GM12878 (cell line): ENCODE measurements at regions of chr10 and their contacts with region 1.

Region 1: DNA sequence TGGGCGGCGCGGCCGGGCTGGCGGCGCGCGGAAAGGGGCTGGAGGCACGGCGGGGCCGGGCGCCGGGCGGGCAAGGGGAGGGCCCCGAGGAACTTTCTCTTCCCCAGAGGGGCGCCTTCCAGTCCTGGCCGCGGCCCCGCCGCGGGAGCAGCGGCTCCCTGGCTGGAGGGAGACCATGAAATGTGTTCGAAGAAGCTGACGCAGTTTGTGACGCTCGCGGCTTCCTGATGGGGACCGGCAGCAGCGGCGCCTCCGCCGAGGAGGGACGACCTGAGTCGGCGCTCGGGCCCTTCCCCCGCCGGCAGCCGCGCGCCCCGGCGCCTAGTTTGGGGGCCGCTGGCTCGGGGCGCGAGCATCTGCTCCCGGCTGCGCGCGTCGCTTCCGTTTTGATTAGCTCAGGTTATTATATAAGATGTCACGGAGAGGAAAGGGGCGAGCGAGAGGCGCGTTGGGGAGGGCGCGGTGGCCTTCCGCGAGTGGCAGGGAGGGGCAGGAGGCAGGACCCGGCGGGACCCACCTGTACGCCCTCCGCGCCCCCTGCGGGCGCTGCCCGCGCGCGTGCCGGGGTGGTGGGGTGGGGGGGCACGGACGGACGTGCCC is 57.1 kb upstream of the PCGF5 start:
- DNase-seq: no peak
- ATAC-seq: peak; percentile 74
- H3K4me3 ChIP-seq: peak overlapping the region; percentile 84
- H3K27ac ChIP-seq: peak overlapping the region; percentile 79
- H3K4me1 ChIP-seq: peaks cover 14% of the 10 kb centered on the region; the same call in 1 of the 2 replicates
- H3K27me3 ChIP-seq: no peaks in the 10 kb centered on the region
- CTCF ChIP-seq: no peak
- EP300 ChIP-seq: 0 out of 4 replicates have a peak, but pooled peaks of 1 of the 2 experiments have one; percentile 30
- POLR2A ChIP-seq: peak; percentile 87
- RAD21 ChIP-seq: no peak; the same call in 1 of the 2 replicates

Region 2: DNA sequence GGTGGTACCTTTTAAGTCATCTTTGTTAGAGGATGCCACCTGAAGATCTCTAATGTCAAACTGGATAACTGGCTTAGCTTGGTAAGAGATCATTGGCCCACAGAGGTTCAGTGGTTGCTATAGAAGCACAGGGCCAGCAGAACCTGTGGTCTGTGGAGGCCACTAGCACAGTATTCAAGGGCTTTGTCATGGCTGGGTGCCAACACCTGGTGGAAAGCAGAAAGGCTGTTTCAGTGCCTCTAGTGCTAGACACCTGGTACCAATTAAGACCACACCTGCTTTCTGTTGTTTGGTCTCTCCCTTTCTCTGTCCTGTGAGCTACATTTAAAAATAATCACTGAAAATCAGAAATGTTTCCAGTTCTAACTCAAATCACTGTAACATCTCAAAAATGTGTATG is 47.1 kb after region 1 on chr10:
- CTCF ChIA-PET with region 1: no interaction called
- POLR2A ChIA-PET with region 1: no interaction called
- RAD21 ChIA-PET with region 1: interaction called, 4 read pairs
- SMC1A ChIA-PET with region 1: interaction called, 11 read pairs
- in situ Hi-C with region 1: no loop called
- intact Hi-C with region 1: no loop called
- DNase-seq: no peak
- ATAC-seq: peak; percentile 86
- H3K4me3 ChIP-seq: no peak overlapping the region
- H3K27ac ChIP-seq: no peak overlapping the region
- H3K4me1 ChIP-seq: peaks cover 36% of the 10 kb centered on the region
- H3K27me3 ChIP-seq: no peaks in the 10 kb centered on the region
- CTCF ChIP-seq: no peak
- EP300 ChIP-seq: no peak; a peak in 1 of 4 replicates
- POLR2A ChIP-seq: no peak
- RAD21 ChIP-seq: no peak

Region 3: GRCh38 chr10:91220194-91220953 is 57.0 kb after region 1 on chr10 and contains the start of gene PCGF5:
- CTCF ChIA-PET with region 1: interaction called, 10 read pairs
- POLR2A ChIA-PET with region 1: interaction called, 4 read pairs
- RAD21 ChIA-PET with region 1: interaction called, 10 read pairs
- SMC1A ChIA-PET with region 1: interaction called, 8 read pairs
- in situ Hi-C with region 1: no loop called
- intact Hi-C with region 1: loop called (anchors 2 kb)
- DNase-seq: no peak
- ATAC-seq: peak; percentile 99
- H3K4me3 ChIP-seq: peak within 1 kb of the TSS; percentile 99
- H3K27ac ChIP-seq: peak within 1 kb of the TSS; percentile 84
- H3K4me1 ChIP-seq: peaks cover 10% of the 10 kb centered on the region; the same call in 1 of the 2 replicates
- H3K27me3 ChIP-seq: no peaks in the 10 kb centered on the region
- CTCF ChIP-seq: peak in 2 of 3 experiments; percentile 24 to 39; a peak in 3 of 6 replicates
- EP300 ChIP-seq: no peak
- POLR2A ChIP-seq: peak; percentile 82
- RAD21 ChIP-seq: no peak
- polyA plus RNA-seq, gene PCGF5: 33.2 to 35.0 TPM